Esophagus squamous epithelium (tissue), 5 donors: ENCODE measurements at regions of chr19 and their contacts with region 1.

Region 1: GRCh38 chr19:7340959-7341837 is 7.5 kb upstream of the ARHGEF18 start:
- DNase-seq: no peak
- H3K4me3 ChIP-seq: no peak overlapping the region
- H3K27ac ChIP-seq: no peak overlapping the region
- H3K4me1 ChIP-seq: peaks cover 0 to 13% (median 0%) of the 10 kb centered on the region in 3 donors
- H3K27me3 ChIP-seq: peaks cover 0 to 25% (median 0%) of the 10 kb centered on the region in 4 donors
- CTCF ChIP-seq: peak; percentile 77 to 95 (median 91)
- POLR2A ChIP-seq: no peak

Region 2: DNA sequence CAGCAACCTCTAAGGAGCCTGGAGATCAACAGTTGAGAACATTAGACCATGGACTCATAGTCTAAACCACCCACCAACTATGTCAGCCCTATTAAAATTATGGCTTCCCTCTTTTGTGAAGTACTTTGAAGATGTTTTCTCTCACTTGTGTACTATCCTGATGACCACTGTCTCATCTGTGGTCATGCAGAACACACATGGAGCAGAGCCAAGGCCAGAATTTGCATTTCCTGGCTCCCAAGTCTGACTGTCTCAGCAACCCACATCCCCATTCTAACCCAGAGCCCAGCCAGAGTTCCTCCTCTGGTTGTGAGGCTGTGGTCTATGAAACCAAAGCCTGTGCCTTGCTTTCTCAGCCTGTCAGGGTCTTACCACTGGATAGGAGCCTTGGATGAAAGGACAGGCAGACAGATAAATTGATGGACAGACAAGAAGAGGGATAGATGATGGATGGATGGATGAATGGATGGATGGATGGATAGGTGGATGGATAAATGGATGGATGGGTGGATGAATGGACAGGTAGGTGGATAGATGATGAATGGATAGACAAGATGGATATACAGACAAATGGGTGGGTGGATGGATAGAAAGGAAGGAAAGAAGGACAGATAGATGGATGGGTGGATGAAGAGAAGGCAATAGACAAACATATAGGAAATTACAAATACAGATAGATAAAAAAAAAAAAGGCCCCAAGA is 236.3 kb before region 1 on chr19:
- intact Hi-C with region 1: loop called (anchors 10 kb)
- DNase-seq: no peak
- H3K4me3 ChIP-seq: no peak overlapping the region
- H3K27ac ChIP-seq: no peak overlapping the region
- H3K4me1 ChIP-seq: peaks cover 0 to 9% (median 3%) of the 10 kb centered on the region in 3 donors
- H3K27me3 ChIP-seq: peaks cover 0 to 25% (median 0%) of the 10 kb centered on the region in 4 donors
- CTCF ChIP-seq: no peak
- POLR2A ChIP-seq: no peak

Region 3: GRCh38 chr19:7145494-7146485 is 195.4 kb before region 1 on chr19:
- intact Hi-C with region 1: loop called (anchors 10 kb)
- DNase-seq: no peak
- H3K4me3 ChIP-seq: no peak overlapping the region
- H3K27ac ChIP-seq: no peak overlapping the region
- H3K4me1 ChIP-seq: no peaks in the 10 kb centered on the region
- H3K27me3 ChIP-seq: no peaks in the 10 kb centered on the region
- CTCF ChIP-seq: no peak
- POLR2A ChIP-seq: no peak

Region 4: DNA sequence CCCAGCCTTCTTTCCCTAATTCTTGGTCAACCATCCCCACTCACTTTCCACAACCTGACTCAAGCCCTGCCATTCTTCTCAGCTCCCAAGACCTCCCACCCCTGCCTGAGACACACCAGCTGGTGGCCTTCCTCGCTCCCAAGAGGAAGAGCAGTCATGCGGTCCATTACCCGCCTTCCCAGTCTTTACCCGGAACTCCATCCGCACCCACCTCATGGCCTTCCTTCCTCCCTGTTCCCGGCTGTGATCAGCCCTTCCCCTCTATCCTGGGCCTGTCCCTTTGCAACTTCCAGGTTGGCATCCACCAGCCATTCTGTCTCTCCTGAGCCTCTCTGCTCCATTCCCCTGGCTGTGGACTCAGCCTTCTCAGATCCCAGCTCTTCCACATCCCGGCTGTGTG is 28.4 kb before region 1 on chr19:
- intact Hi-C with region 1: no loop called
- DNase-seq: no peak
- H3K4me3 ChIP-seq: no peak overlapping the region
- H3K27ac ChIP-seq: no peak overlapping the region
- H3K4me1 ChIP-seq: no peaks in the 10 kb centered on the region
- H3K27me3 ChIP-seq: no peaks in the 10 kb centered on the region
- CTCF ChIP-seq: no peak
- POLR2A ChIP-seq: no peak